Heart left ventricle (tissue), 16 donors: ENCODE measurements at regions of chr2 and their contacts with region 1.

Region 1: GRCh38 chr2:66024396-66024795 is 410.5 kb upstream of the MEIS1 start:
- DNase-seq: no peak
- ATAC-seq: no peak
- H3K4me3 ChIP-seq: no peak overlapping the region
- H3K27ac ChIP-seq: no peak overlapping the region
- H3K4me1 ChIP-seq: no peaks in the 10 kb centered on the region
- H3K27me3 ChIP-seq: no peaks in the 10 kb centered on the region
- CTCF ChIP-seq: no peak
- POLR2A ChIP-seq: no peak

Region 2: GRCh38 chr2:65638443-65638842 is 386.0 kb before region 1 on chr2:
- intact Hi-C with region 1: no loop called
- DNase-seq: no peak
- ATAC-seq: no peak
- H3K4me3 ChIP-seq: no peak overlapping the region
- H3K27ac ChIP-seq: no peak overlapping the region
- H3K4me1 ChIP-seq: no peaks in the 10 kb centered on the region
- H3K27me3 ChIP-seq: peaks cover 0 to 13% (median 0%) of the 10 kb centered on the region in 9 donors
- CTCF ChIP-seq: peak in 2 of 12 donors; percentile 6 to 10
- POLR2A ChIP-seq: no peak

Region 3: GRCh38 chr2:65991381-65992197 is 32.8 kb before region 1 on chr2:
- intact Hi-C with region 1: loop called in 1 of 10 experiments (anchors 2 kb)
- DNase-seq: no peak
- ATAC-seq: no peak
- H3K4me3 ChIP-seq: no peak overlapping the region
- H3K27ac ChIP-seq: no peak overlapping the region
- H3K4me1 ChIP-seq: no peaks in the 10 kb centered on the region
- H3K27me3 ChIP-seq: peaks cover 0 to 3% (median 0%) of the 10 kb centered on the region in 9 donors
- CTCF ChIP-seq: no peak
- POLR2A ChIP-seq: no peak

Region 4: DNA sequence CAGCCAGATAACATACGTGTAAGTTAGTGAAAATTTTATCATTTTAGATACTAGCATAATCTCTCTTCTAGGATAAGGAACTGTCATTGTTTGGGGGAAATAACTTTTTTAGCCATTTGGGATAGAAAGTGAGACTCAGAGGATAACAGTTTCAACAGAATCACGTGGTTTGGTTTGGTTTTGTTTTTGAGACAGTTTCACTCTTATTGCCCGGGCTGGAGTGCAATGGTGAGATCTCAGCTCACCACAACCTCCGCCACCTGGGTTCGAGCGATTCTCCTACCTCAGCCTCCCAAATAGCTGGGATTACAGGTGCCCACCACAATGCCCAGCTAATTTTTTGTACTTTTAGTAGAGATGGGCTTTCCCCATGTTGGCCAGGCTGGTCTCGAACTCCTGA is 87.3 kb after region 1 on chr2:
- intact Hi-C with region 1: no loop called
- DNase-seq: no peak
- ATAC-seq: no peak
- H3K4me3 ChIP-seq: no peak overlapping the region
- H3K27ac ChIP-seq: no peak overlapping the region
- H3K4me1 ChIP-seq: no peaks in the 10 kb centered on the region
- H3K27me3 ChIP-seq: no peaks in the 10 kb centered on the region
- CTCF ChIP-seq: no peak
- POLR2A ChIP-seq: no peak